ENCODE measurements at regions of chr4 and their contacts with region 1.

Region 1: GRCh38 chr4:88366460-88366859 is 12.2 kb upstream of the HERC6 start:
- H3K4me3 Mint-ChIP-seq: no peak overlapping the region
- H3K27ac Mint-ChIP-seq: no peak overlapping the region
- H3K4me1 Mint-ChIP-seq: peaks cover 6% of the 10 kb centered on the region
- H3K27me3 Mint-ChIP-seq: no peaks in the 10 kb centered on the region

Region 2: DNA sequence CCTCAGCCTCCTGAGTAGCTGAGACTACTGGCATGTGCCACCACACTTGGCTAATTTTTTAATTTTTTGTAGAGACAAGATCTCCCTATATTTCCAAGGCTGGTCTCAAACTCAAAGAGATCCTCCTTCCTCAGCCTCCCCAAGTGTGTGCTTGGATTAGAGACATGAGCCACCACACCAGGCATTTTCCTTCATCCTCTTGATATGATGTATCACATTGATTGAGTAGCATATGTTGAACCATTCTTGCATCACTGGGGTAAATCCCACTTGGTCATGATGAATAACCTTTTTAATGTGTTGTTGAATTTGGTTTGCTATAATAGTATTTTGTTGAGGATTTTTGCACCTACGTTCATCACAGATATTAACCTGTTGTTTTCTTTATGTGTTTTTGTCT is 57.9 kb before region 1 on chr4:
- intact Hi-C with region 1: loop called (anchors 10 kb)
- H3K4me3 Mint-ChIP-seq: no peak overlapping the region
- H3K27ac Mint-ChIP-seq: no peak overlapping the region
- H3K4me1 Mint-ChIP-seq: peaks cover 5% of the 10 kb centered on the region
- H3K27me3 Mint-ChIP-seq: peaks cover 8% of the 10 kb centered on the region